PC-9 (cell line): ENCODE measurements at regions of chr18 and their contacts with region 1.

Region 1: DNA sequence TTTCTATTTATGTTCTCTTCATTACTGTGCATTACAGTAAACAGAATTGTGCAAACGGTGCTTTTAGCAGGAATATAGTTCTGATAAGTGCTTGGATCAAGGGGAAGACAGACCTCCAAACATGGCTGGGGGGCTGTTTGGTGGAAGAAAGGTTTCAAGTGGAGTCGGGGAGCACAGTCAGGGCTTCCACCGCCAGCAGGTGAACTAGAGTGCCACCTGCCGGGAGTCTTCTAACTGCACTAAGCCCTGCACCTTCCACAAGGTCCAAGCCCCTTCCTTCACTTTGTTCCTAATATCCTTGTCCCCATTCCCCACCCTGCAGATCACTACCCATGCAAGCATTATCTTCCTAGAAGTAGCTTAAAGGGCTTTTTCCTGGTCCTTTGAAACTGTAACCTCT is 11.1 kb downstream of the ONECUT2 start:
- DNase-seq: peak; percentile 18 to 39
- H3K4me3 ChIP-seq: peak overlapping the region; percentile 24; the same call in 1 of the 2 replicates
- H3K27ac ChIP-seq: peak overlapping the region; percentile 82
- H3K4me1 ChIP-seq: peaks cover 42% of the 10 kb centered on the region
- H3K27me3 ChIP-seq: no peaks in the 10 kb centered on the region
- CTCF ChIP-seq: peak; percentile 82

Region 2: DNA sequence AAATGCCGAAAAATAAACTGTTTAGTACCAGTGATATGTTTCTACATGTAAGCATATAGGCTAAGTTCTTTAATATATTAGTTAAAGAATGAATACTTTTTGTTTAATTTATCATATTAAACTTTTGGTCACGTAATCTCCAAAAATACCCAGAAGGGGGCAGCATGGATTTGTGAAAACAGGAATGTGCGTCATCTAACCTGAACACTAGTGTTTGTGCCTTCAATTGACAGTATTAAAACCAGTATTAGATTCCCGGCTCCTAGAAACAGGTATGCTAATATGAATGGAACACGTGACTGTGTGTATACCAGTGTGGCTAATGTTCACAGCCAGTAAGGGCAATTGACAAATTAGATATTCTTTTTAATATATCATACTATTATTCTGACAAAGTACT is 743.4 kb before region 1 on chr18:
- CTCF ChIA-PET with region 1: no interaction called
- POLR2A ChIA-PET with region 1: no interaction called
- intact Hi-C with region 1: loop called (anchors 5 kb)
- DNase-seq: peak in 1 of 2 experiments; percentile 1
- H3K4me3 ChIP-seq: no peak overlapping the region
- H3K27ac ChIP-seq: no peak overlapping the region
- H3K4me1 ChIP-seq: no peaks in the 10 kb centered on the region
- H3K27me3 ChIP-seq: no peaks in the 10 kb centered on the region
- CTCF ChIP-seq: peak; percentile 71

Region 3: DNA sequence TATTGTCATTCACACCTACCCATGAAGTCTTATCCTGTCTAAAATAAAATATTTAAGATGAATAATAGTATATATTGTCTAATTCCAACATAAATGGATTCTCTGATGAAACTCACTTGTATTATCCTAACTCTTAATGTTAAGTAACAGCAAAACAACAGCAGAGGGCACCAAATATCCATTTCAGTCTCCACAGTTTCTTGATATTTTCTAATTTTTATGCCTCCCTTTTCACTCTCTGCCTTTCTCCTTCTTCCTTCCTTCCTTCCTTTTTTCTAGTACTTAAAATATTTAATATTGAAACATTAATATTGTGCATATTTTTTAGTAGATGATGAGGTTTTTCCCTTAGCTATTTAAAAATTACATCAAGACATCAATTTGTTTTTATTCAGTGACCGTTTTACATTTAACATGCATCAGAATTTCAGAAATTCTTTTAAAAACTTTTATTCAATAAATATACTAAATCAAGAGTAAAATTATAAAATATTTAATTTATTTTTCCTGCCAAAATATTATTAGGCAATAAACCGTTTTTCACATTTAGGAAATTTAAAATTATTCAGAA is 697.5 kb before region 1 on chr18:
- CTCF ChIA-PET with region 1: no interaction called
- POLR2A ChIA-PET with region 1: no interaction called
- intact Hi-C with region 1: loop called (anchors 5 kb)
- DNase-seq: no peak
- H3K4me3 ChIP-seq: no peak overlapping the region
- H3K27ac ChIP-seq: no peak overlapping the region
- H3K4me1 ChIP-seq: no peaks in the 10 kb centered on the region
- H3K27me3 ChIP-seq: no peaks in the 10 kb centered on the region
- CTCF ChIP-seq: peak; percentile 86